Posterior cingulate gyrus (tissue), 11 donors: ENCODE measurements at regions of chr14 and their contacts with region 1.

Region 1: GRCh38 chr14:54566410-54567223 is at the start of gene SAMD4A:
- DNase-seq: peak; percentile 58 to 97 (median 74)

Region 2: GRCh38 chr14:54691525-54692283 is 125.1 kb after region 1 on chr14:
- intact Hi-C with region 1: loop called (anchors 2 kb)
- DNase-seq: peak; percentile 53 to 95 (median 69)

Region 3: DNA sequence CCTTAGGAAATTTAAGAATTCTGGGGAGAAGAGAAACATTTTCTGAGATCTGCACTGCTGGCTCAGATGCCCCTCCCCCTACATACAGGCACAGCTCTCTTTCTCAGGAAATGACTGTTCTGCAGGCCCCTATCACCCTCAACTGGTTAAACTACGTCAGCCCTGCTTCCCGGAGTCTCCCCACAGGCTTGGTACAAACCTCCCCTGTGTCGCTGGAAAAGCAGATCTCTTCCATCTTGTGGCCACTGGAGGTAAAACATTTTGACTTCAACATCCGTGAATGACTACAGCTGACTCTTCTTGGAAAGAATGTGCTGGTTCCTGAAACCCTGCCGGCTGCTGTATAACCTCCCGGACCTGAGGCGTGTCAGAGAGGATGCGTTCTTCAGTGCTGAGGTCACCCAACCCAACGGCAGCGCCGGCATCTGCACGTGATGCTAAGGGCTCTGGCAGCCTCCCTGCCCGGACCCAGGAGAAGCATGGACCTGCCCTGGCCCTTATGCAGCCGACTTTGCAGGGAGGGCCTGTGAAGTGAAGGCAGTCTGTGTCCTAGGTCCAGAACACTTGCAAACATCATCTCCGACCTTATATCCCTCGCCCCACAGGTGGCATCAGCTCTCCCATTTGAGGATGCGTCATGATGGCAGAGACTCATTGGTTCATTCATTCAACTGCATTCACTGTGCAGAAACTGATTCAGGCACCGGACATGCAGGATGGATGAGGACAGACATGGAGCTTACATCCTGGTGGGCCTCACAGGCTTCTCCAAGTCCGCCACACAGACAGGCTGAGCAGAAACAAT is 206.8 kb after region 1 on chr14:
- intact Hi-C with region 1: loop called (anchors 1 kb)
- DNase-seq: peak in 6 of 10 donors; percentile 37 to 91 (median 58)

Region 4: DNA sequence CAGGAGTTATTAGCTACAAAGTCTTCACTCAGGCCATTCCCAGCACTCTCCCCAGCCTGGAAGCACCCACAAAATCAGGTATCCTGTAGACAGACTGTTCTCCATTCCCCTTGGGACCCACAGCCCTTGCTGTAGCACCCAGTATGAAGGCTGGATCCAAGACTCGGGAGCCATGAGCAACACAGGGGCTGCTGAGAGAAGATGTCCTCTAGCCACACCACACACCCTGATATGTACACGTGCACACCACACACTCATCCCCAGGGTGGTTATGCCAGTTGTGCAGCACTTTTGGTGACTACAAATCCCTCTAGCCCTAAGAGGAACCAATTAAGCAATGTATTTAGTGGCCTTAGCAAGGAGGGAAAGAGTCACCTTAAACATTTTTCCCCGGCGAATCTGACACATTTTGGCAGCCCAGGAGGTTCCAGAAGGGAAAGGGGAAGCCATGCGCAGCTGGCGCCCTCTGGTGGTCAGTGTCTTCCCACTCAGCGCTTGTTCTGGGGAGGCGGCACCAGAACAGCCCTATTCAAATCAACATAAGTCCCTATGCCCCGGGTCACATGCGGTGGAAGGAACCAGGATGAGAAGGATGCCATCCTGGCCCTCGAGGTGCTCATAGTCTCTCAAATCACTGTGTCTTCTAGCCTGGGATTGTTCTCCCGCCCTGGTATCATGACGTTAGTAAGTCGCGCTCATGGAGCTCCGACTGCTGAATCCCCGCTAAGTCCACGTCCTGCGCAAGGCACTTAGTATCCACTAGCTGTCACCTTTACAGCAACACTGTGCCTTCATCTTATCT is 239.1 kb after region 1 on chr14:
- intact Hi-C with region 1: loop called (anchors 10 kb)
- DNase-seq: peak; percentile 56 to 96 (median 84)

Region 5: DNA sequence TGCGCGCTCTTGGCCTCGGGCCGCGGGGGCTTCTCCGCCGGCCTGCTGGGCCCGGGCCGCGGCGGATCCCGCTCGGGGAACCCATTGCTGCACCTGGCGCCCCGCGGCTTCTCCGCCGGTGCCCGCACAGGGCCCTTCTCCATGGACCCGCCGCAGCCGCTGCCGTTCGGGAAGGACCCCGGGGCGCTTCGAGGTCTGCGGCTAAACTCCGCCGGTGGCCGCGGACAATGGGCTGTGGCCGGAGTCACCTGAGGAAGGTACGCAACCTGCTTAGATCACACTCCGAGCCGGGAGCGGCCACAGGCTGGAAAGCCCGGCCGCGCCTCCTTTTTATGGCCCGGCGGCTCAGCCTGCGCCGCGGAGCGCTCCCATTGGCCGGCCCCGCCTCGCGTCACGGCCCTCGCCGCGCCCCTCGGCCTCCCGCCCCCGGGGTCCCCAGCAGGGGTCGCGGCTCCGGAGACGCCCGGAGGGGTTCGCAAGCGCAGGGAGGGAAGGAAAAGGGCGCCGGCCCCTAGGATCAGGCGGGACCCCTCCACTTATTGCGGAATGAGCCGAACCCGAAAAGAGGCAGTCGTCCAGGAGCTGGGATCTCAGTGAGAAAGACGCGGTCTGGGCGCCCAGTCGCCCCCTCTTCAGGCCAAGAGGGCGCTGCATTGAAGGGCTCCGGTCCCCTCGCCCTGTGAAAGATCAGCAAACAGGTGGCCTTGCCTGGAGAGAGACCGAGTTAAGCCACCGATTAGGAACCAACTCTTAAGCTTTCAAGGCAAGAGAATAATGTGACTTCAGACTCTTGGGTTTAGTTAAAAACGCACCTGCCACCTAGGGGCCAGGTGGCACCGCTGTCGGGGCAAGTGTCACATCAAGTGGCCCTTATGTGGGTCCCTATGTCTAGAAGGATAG is 336.2 kb after region 1 on chr14 and contains the start of gene GCH1:
- intact Hi-C with region 1: loop called (anchors 10 kb)
- DNase-seq: peak in 8 of 10 donors; percentile 23 to 92 (median 48)